HepG2 (cell line): ENCODE measurements at regions of chr5 and their contacts with region 1.

Region 1: DNA sequence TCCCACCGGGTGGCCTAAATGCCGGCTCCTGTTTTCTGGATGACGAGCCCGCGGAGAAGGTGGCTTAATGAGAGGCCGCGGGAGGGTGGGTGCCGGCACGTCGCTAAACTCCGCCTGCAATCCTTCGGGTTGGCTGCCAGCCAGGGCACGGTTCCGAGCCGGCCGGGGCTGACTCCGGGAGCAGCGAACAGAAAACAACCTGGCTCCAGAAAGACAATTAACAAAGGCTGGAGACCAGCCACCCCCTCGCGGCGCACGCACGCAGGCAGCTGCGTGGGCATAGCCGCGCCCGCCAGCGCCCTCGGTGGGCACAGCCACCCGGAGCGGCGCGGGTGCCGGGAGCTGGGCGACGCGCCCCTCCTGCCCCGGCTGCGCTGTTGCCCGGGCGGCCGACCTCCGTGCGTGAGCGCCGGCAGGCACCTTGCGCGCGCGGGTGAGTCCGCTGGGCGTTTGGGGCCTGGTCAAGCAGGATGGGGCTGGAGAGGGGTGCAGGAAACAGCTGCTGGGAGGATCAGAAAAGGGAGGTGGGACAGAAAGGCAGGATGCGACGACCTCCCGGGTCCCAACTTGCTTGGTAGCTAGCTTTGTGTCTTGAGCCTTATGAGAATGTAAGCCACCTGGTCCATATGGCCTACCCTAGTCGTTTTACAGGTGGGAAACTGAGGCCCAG is at the start of gene ARHGEF37:
- DNase-seq: peak; percentile 12
- ATAC-seq: peak; percentile 86
- H3K4me3 ChIP-seq: peak within 1 kb of the TSS; percentile 49 to 72 (median 60)
- H3K27ac ChIP-seq: no peak within 1 kb of the TSS
- H3K4me1 ChIP-seq: peaks cover 27% of the 10 kb centered on the region
- H3K27me3 ChIP-seq: peaks cover 0 to 31% of the 10 kb centered on the region in 2 experiments; a peak in 2 of 5 replicates
- CTCF ChIP-seq: no peak
- EP300 ChIP-seq: no peak
- POLR2A ChIP-seq: no peak
- RAD21 ChIP-seq: no peak
- total RNA-seq, gene ARHGEF37: 0.27 TPM in 1 of 2 replicates, not detected in the other

Region 2: DNA sequence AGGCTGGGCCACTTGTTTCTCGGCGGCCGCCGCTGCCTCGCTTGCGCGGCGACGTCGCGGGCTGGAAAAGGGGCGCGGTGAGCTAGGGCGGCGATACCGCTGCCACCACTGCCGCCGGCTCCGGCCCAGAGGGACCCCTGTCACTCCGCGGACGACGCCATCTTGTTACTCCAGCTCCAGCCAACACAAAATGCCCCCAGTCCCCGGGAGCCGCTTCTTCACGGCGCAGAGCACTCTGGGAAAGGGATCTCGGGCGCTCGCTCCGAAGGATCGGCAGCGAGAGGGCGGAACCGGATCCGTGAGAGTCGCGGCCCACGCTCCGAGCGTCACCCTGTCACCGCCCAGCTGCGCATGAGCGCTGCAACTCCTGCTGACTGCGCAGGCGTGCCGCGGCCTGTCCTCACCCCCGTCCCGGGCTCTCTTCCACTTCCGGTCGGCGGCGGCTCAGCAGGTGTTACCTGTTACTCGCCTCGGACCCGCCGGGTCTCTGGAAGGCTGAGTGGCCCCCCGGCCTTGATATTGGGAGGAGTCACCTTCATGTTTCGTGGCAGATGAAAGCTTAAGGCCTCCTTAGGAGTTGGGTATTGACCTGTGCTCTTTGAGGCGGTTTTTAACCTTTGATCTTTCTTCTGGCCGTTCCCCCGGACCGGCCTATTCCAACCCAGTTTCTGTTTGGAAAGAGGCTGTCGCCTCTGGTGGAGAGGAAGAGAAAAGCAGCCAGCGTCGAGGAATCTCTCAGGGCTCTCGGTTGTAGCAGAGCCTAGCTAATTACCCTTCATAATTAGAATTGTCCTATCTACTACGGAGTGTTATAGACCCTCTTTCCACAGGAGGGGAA is 29.9 kb before region 1 on chr5 and contains the start of gene CSNK1A1:
- CTCF ChIA-PET with region 1: no interaction called
- POLR2A ChIA-PET with region 1: no interaction called
- in situ Hi-C with region 1: no loop called
- intact Hi-C with region 1: no loop called
- DNase-seq: peak; percentile 95
- ATAC-seq: peak; percentile 93
- H3K4me3 ChIP-seq: peak within 1 kb of the TSS; percentile 95 to 99 (median 98)
- H3K27ac ChIP-seq: peak within 1 kb of the TSS; percentile 97
- H3K4me1 ChIP-seq: peaks cover 35% of the 10 kb centered on the region
- H3K27me3 ChIP-seq: no peaks in the 10 kb centered on the region; a peak in 1 of 5 replicates
- CTCF ChIP-seq: peak; percentile 76
- EP300 ChIP-seq: peak in 1 of 2 experiments; percentile 58; a peak in 1 of 4 replicates
- POLR2A ChIP-seq: peak; percentile 86 to 88
- RAD21 ChIP-seq: peak; percentile 65
- total RNA-seq, gene CSNK1A1: 149 and 210 TPM in 2 replicates

Region 3: DNA sequence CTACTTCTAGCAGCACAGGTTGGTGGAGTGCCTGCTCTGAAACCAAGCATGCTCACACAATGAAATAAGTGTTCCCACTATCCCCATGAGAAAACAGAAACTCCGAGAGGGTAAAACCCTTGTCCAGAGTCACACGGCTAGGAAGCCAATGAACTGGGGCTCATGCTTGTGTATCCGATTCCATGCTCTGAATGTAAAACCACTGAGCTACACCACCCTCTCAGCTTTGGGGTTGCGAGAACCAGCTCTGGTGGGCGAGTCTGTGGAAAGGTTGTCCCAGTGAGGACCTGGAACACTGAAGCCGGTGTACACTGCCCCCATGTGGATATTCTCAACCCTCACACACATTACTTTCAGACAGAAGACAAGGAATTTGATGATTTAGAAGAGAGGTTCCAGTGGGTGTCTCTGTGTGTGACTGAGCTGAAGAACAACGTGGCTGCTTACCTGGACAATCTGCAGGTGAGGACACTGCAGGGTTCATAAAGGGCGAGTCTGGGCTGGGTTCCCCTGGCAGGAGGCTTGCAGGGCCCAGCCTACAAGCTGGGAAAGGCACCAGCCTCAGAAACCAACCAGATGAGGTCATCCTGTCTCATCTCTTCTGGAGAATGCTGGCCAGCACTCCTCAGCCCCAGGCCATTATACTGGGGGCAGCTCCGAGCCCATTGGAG is 37.4 kb after region 1 on chr5:
- CTCF ChIA-PET with region 1: no interaction called
- POLR2A ChIA-PET with region 1: no interaction called
- in situ Hi-C with region 1: no loop called
- intact Hi-C with region 1: loop called (anchors 5 kb)
- DNase-seq: peak; percentile 53
- ATAC-seq: peak; percentile 84
- H3K4me3 ChIP-seq: no peak overlapping the region
- H3K27ac ChIP-seq: no peak overlapping the region
- H3K4me1 ChIP-seq: peaks cover 20% of the 10 kb centered on the region
- H3K27me3 ChIP-seq: peaks cover 0 to 3% of the 10 kb centered on the region in 2 experiments; a peak in 1 of 5 replicates
- CTCF ChIP-seq: peak; percentile 89
- EP300 ChIP-seq: no peak
- POLR2A ChIP-seq: no peak
- RAD21 ChIP-seq: peak; percentile 75